ENCODE measurements at regions of chr6 and their contacts with region 1.

Region 1: GRCh38 chr6:159720708-159721107 is 6.6 kb upstream of the WTAP start:
- DNase-seq: no peak
- ATAC-seq: no peak
- H3K4me3 ChIP-seq: no peak overlapping the region
- H3K27ac ChIP-seq: no peak overlapping the region
- H3K4me1 ChIP-seq: peaks cover 10% of the 10 kb centered on the region
- H3K27me3 ChIP-seq: no peaks in the 10 kb centered on the region
- CTCF ChIP-seq: peak; percentile 37; the same call in 1 of the 2 replicates
- POLR2A ChIP-seq: no peak
- RAD21 ChIP-seq: no peak

Region 2: DNA sequence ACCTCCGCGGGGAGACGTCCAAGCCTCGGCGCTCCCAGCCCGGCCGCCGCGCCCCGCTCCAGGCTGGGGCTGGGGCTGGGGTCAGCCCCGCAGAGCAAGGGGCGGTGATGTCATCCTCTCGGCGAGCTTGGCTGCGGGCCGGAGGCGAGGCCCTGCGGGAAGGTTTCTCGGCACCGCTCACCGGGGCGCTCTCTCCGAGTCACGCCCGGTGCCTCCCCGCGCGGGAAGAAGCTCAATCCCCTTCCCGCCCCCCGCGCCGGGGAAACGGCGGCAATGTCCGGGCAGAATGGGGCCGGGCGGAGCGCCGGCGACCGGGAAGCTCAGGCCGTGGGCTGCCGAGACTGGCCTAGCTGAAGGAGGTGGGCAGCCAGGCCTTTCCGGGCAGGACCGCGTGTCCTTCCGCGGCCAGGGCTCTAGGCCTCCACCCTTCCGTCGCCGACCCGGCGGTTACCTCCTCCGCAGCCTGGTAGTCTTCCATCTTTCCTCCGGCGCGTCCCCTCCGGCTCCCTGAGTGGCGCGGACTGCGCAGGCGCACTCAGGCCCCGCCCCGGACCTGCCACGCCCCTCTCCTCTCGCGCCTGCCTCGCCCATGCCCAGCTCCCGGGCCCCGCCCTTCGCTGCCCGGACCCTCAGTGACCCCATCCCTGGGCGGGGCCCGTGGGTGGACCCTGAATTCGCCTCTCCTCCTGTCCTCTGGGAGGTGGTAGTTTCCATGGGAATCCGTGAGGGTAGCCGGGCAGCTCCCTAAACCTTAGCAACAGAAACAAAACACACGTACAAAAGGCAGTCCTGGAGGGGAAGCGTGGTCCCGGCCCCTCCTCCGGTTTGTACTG is 1076.3 kb before region 1 on chr6 and contains the start of gene DYNLT1:
- CTCF ChIA-PET with region 1: no interaction called
- POLR2A ChIA-PET with region 1: no interaction called
- dilution Hi-C with region 1: no loop called
- in situ Hi-C with region 1: loop called (anchors 25 kb)
- intact Hi-C with region 1: no loop called
- DNase-seq: peak; percentile 84
- ATAC-seq: peak; percentile 83
- H3K4me3 ChIP-seq: peak within 1 kb of the TSS; percentile 95
- H3K27ac ChIP-seq: peak within 1 kb of the TSS; percentile 98
- H3K4me1 ChIP-seq: peaks cover 25% of the 10 kb centered on the region
- H3K27me3 ChIP-seq: no peaks in the 10 kb centered on the region
- CTCF ChIP-seq: no peak
- POLR2A ChIP-seq: peak; percentile 94
- RAD21 ChIP-seq: no peak
- total RNA-seq, gene DYNLT1: 187 and 235 TPM in 2 replicates

Region 3: GRCh38 chr6:159701411-159701999 is 19.2 kb before region 1 on chr6:
- CTCF ChIA-PET with region 1: interaction called, 10 read pairs
- POLR2A ChIA-PET with region 1: no interaction called
- dilution Hi-C with region 1: no loop called
- in situ Hi-C with region 1: no loop called
- intact Hi-C with region 1: loop called (anchors 2 kb)
- DNase-seq: peak; percentile 97
- ATAC-seq: peak; percentile 82
- H3K4me3 ChIP-seq: no peak overlapping the region
- H3K27ac ChIP-seq: peak overlapping the region; percentile 93
- H3K4me1 ChIP-seq: peaks cover 9% of the 10 kb centered on the region
- H3K27me3 ChIP-seq: no peaks in the 10 kb centered on the region
- CTCF ChIP-seq: no peak
- POLR2A ChIP-seq: no peak
- RAD21 ChIP-seq: no peak

Region 4: DNA sequence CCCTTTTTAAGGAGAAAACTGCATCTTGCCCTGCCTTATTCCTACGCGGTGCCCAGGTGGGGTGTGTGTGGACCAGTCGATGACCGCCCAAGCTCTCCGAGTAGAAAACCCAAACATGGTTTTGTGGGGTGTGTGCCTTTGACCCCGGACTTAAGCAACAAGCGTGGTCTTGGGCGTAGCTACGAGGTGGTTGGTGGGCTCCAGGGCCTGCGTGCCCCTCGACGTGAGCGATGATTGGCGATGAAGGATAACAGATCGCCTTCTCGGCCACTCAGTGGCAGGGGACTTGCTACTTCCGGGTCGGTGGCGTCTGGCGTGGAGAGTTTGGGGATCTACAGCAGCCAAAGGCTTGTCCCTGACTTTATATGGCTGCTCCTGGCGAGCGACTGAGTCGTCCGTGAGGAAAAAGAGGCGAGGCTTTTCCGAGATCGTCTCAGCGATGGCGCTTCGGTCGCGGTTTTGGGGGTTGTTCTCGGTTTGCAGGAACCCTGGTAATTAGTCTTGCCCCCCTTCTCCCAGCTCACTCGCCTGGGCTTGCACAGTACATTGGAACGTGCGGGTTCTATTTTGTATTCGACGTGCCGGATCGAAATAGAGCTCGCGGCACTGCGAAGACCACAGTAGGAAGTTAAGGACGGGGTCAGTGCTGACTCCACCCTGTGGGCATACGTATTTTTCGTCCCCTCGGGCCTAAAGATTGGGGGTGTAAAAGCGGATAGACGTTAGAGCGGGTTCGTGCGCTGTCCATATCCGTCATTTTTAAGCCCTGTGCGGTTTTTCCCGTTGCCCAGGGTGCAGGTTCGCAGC is 69.6 kb after region 1 on chr6 and contains the start of gene MRPL18:
- CTCF ChIA-PET with region 1: no interaction called
- POLR2A ChIA-PET with region 1: no interaction called
- dilution Hi-C with region 1: no loop called
- in situ Hi-C with region 1: no loop called
- intact Hi-C with region 1: no loop called
- DNase-seq: peak; percentile 98
- ATAC-seq: peak; percentile 88
- H3K4me3 ChIP-seq: peak within 1 kb of the TSS; percentile 89
- H3K27ac ChIP-seq: peak within 1 kb of the TSS; percentile 91
- H3K4me1 ChIP-seq: peaks cover 4% of the 10 kb centered on the region
- H3K27me3 ChIP-seq: no peaks in the 10 kb centered on the region
- CTCF ChIP-seq: no peak
- POLR2A ChIP-seq: peak; percentile 83
- RAD21 ChIP-seq: no peak
- total RNA-seq, gene MRPL18: 53.4 and 70.5 TPM in 2 replicates

Region 5: DNA sequence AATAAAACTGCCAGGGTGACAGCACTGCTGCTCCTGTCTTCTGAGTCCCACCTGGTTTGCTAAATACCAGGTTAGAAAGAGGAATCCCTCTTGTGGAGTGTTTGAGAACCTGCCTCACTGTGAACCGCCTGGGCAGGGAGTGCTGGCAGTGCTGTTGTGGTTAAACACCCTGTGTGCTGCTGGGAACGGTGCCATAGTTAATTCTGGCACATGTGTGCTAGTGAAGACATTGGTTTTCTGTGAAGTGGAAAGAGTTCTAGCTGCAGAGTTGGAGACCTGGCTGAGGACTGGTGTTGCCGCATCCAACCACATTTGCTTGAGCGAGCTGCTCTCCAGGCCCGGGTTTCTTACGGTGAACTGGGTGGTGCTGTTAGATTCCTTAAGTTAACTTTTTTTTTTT is 320.9 kb after region 1 on chr6:
- CTCF ChIA-PET with region 1: no interaction called
- POLR2A ChIA-PET with region 1: no interaction called
- dilution Hi-C with region 1: no loop called
- in situ Hi-C with region 1: no loop called
- intact Hi-C with region 1: no loop called
- DNase-seq: peak; percentile 70
- ATAC-seq: peak; percentile 32
- H3K4me3 ChIP-seq: no peak overlapping the region
- H3K27ac ChIP-seq: no peak overlapping the region
- H3K4me1 ChIP-seq: peaks cover 5% of the 10 kb centered on the region
- H3K27me3 ChIP-seq: no peaks in the 10 kb centered on the region
- CTCF ChIP-seq: 0 out of 2 replicates have a peak, but pooled peaks have one; percentile 19
- POLR2A ChIP-seq: no peak
- RAD21 ChIP-seq: 0 out of 2 replicates have a peak, but pooled peaks have one; percentile 19

Measured in IMR-90 (cell line).